CD14-positive monocyte (primary cell): ENCODE measurements at regions of chr20 and their contacts with region 1.

Region 1: GRCh38 chr20:33666293-33667244 is at the start of gene ACTL10:
- DNase-seq: peak; percentile 95 to 98 (median 98)
- H3K4me3 ChIP-seq: peak within 1 kb of the TSS; percentile 44 to 85 (median 51)
- H3K4me3 Mint-ChIP-seq: peak within 1 kb of the TSS; percentile 79 to 80
- H3K27ac ChIP-seq: peak within 1 kb of the TSS; percentile 78 to 82
- H3K27ac Mint-ChIP-seq: peak within 1 kb of the TSS; percentile 74 to 92 (median 88)
- H3K4me1 ChIP-seq: peaks cover 37 to 54% of the 10 kb centered on the region in 2 donors
- H3K4me1 Mint-ChIP-seq: peaks cover 38% of the 10 kb centered on the region
- H3K27me3 ChIP-seq: no peaks in the 10 kb centered on the region
- H3K27me3 Mint-ChIP-seq: peaks cover 2 to 3% (median 2%) of the 10 kb centered on the region in 3 donors
- CTCF ChIP-seq: peak; percentile 20
- polyA plus RNA-seq, gene ACTL10: 0.31 to 1.2 (median 1.1) TPM

Region 2: GRCh38 chr20:33450867-33451266 is 215.7 kb before region 1 on chr20:
- intact Hi-C with region 1: loop called (anchors 2 to 5 kb)
- DNase-seq: no peak
- H3K4me3 ChIP-seq: no peak overlapping the region
- H3K4me3 Mint-ChIP-seq: no peak overlapping the region
- H3K27ac ChIP-seq: no peak overlapping the region
- H3K27ac Mint-ChIP-seq: no peak overlapping the region
- H3K4me1 ChIP-seq: no peaks in the 10 kb centered on the region
- H3K4me1 Mint-ChIP-seq: peaks cover 2% of the 10 kb centered on the region
- H3K27me3 ChIP-seq: no peaks in the 10 kb centered on the region
- H3K27me3 Mint-ChIP-seq: peaks cover 3 to 7% (median 3%) of the 10 kb centered on the region in 3 donors
- CTCF ChIP-seq: no peak

Region 3: GRCh38 chr20:33459599-33459998 is 207.0 kb before region 1 on chr20:
- intact Hi-C with region 1: loop called (anchors 2 to 5 kb)
- DNase-seq: no peak
- H3K4me3 ChIP-seq: no peak overlapping the region
- H3K4me3 Mint-ChIP-seq: no peak overlapping the region
- H3K27ac ChIP-seq: no peak overlapping the region
- H3K27ac Mint-ChIP-seq: no peak overlapping the region
- H3K4me1 ChIP-seq: no peaks in the 10 kb centered on the region
- H3K4me1 Mint-ChIP-seq: peaks cover 2% of the 10 kb centered on the region
- H3K27me3 ChIP-seq: no peaks in the 10 kb centered on the region
- H3K27me3 Mint-ChIP-seq: peaks cover 1 to 4% (median 2%) of the 10 kb centered on the region in 3 donors
- CTCF ChIP-seq: no peak

Region 4: DNA sequence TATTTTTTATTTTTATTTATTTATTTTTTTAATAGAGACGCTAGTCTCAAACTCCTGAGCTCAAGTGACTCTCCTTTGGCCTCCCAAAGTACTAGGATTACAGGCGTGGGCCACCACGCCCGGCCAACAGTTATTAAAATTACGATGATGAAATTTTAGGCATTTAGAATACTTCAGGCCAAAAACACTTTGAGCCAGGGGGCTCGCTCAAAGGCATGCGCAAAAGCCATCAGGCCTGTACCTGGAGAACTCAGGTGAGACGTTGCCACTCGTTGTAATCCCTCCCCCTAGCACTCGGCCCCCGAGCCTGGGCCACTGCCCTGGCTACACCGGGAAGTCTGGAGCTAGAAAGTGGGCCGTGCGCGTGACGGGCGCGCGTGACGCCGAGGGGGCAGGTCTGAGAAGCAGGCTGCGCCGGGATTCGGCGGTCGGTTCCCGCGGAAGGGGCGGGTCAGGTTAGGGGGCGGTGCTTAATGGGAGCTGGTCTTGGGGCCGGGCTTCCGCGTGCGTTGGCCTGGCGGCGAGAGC is 177.0 kb before region 1 on chr20:
- intact Hi-C with region 1: loop called (anchors 10 kb)
- DNase-seq: peak; percentile 98
- H3K4me3 ChIP-seq: peak overlapping the region; percentile 58 to 72 (median 61)
- H3K4me3 Mint-ChIP-seq: peak overlapping the region; percentile 78 to 81
- H3K27ac ChIP-seq: peak overlapping the region; percentile 91 to 97
- H3K27ac Mint-ChIP-seq: peak overlapping the region; percentile 91 to 97 (median 94)
- H3K4me1 ChIP-seq: peaks cover 12 to 15% of the 10 kb centered on the region in 2 donors
- H3K4me1 Mint-ChIP-seq: peaks cover 18% of the 10 kb centered on the region
- H3K27me3 ChIP-seq: no peaks in the 10 kb centered on the region
- H3K27me3 Mint-ChIP-seq: peaks cover 0 to 2% (median 0%) of the 10 kb centered on the region in 3 donors
- CTCF ChIP-seq: no peak

Region 5: DNA sequence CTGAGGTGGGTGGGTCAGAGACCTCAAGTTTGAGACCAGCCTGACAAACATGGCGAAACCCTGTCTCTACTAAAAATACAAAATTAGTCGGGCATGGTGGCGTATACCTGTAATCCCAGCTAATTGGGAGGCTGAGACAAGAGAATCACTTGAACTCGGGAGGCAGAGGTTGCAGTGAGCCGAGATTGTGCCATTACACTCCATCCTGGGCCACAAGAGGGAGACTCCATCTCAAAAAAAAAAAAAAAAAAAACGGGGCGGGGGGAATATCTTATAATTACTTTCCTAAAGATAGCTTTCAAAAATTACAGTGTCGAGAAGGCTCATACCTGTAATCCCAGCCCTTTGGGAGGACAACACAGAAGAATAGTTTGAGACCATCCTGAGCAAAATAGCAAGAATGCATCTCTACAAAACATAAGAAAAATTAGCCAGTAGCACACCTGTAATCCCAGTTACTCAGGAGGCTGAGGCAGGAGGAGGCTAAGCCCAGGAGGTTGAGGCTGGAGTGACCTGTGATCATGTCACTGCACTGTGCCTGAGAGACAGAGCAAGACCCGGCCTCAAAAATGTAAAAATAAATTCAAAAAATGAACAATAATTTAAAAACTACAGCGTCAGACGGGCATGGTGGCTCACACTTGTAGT is 150.9 kb before region 1 on chr20:
- intact Hi-C with region 1: no loop called
- DNase-seq: no peak
- H3K4me3 ChIP-seq: no peak overlapping the region
- H3K4me3 Mint-ChIP-seq: no peak overlapping the region
- H3K27ac ChIP-seq: no peak overlapping the region
- H3K27ac Mint-ChIP-seq: no peak overlapping the region
- H3K4me1 ChIP-seq: no peaks in the 10 kb centered on the region
- H3K4me1 Mint-ChIP-seq: peaks cover 5% of the 10 kb centered on the region
- H3K27me3 ChIP-seq: no peaks in the 10 kb centered on the region
- H3K27me3 Mint-ChIP-seq: no peaks in the 10 kb centered on the region
- CTCF ChIP-seq: no peak

Region 6: DNA sequence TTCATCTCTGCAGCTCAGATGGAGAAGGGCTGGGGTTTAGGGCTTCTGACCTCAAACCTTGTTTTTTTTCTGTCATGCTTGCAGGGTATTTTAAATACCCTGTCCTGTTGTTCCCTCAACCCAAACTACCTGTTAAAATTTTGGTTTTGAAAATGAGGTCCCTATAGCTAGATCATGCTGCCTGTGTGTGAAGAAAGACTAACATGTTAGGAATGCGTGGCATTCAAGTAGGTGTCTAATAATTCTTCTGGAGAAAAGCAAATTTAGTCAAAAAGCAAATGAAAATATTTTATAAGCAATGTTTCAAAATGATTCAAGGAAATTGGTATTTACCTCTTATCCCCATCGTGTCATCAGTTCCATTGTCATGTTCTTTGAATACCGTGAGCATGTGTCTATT is 81.6 kb before region 1 on chr20:
- intact Hi-C with region 1: no loop called
- DNase-seq: no peak
- H3K4me3 ChIP-seq: no peak overlapping the region
- H3K4me3 Mint-ChIP-seq: no peak overlapping the region
- H3K27ac ChIP-seq: no peak overlapping the region
- H3K27ac Mint-ChIP-seq: no peak overlapping the region
- H3K4me1 ChIP-seq: no peaks in the 10 kb centered on the region
- H3K4me1 Mint-ChIP-seq: no peaks in the 10 kb centered on the region
- H3K27me3 ChIP-seq: no peaks in the 10 kb centered on the region
- H3K27me3 Mint-ChIP-seq: no peaks in the 10 kb centered on the region
- CTCF ChIP-seq: no peak

Region 7: DNA sequence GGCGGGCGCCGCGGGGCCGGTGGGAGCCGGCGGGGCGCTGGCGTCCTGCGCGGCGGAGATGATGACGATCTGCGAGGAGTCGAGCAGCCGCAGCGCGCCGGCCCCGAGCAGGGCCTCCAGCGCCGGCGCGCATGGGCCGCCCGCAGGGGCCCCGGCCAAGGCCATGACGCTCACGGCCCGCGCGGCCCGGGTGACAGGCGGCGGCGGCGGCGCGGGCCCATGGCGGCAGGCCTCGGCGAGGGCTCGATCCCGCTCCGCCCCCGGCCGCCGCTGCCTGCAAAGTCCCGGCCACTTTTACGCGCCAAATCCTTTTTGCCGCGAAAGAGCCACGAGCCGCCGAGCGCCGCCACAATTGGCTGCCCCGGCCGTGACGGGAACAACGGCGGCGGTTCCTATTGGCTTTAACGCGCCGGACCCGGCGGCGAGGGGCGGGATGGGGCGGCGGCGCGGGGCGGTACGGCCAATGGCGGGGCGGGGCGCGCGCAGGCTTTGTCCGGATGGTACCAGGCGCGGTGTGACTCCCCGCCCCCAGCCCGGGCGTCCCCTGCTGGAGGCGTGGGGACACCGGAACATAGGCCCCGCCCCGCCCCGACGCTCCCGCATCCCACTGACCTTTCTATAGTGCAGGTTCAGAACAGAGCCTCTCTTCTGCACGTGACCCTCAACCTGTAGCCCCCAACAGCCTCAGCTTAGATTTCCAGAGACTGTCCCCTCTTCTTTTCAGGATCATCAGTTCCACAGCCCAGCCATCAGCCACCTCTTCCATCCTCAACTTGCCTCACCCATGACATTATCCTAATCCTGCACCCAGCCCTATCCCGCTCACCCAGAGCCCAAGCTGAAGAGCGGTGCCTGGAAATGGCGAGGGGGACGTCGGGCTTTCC is 19.8 kb after region 1 on chr20 and contains the start of gene E2F1:
- intact Hi-C with region 1: loop called in 1 of 2 experiments (anchors 1 kb)
- DNase-seq: peak; percentile 86 to 93 (median 89)
- H3K4me3 ChIP-seq: peak within 1 kb of the TSS; percentile 10 to 72 (median 32)
- H3K4me3 Mint-ChIP-seq: peak within 1 kb of the TSS; percentile 79 to 94
- H3K27ac ChIP-seq: peak within 1 kb of the TSS in 1 of 2 donors; percentile 52
- H3K27ac Mint-ChIP-seq: peak within 1 kb of the TSS; percentile 73 to 92 (median 86)
- H3K4me1 ChIP-seq: peaks cover 30 to 50% of the 10 kb centered on the region in 2 donors
- H3K4me1 Mint-ChIP-seq: peaks cover 51% of the 10 kb centered on the region
- H3K27me3 ChIP-seq: no peaks in the 10 kb centered on the region
- H3K27me3 Mint-ChIP-seq: peaks cover 0 to 2% (median 0%) of the 10 kb centered on the region in 3 donors
- CTCF ChIP-seq: peak; percentile 26
- polyA plus RNA-seq, gene E2F1: 0.17 to 1.1 TPM in 2 of 3 donors, not detected in the other

Region 8: DNA sequence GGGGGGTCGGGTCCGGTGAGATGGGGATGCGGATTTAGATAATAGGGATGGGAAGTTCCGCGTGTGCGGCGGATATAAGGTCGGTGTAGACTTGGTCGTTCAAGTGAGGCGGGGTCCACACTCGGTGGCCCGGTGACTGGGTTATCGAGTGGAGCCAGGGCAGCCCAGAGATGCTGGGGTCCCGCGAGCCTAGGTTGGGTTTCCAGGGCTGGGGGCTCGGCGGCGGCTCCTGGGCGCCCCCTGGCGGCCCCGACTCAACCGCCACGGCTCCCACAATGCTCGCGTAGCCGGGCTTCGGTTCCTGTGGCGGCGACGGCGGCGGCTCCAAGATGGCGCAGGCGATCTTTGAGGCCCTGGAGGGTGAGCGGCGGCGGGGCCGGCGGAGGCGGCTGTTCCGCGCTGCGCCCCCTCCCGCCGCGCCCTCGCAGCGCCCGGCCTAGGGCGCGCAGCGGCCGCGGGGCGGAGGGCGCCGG is 65.2 kb after region 1 on chr20 and contains the start of gene ZNF341:
- intact Hi-C with region 1: loop called in 1 of 2 experiments (anchors 5 kb)
- DNase-seq: peak; percentile 85 to 89 (median 87)
- H3K4me3 ChIP-seq: peak within 1 kb of the TSS; percentile 50 to 86 (median 86)
- H3K4me3 Mint-ChIP-seq: peak within 1 kb of the TSS; percentile 85 to 96
- H3K27ac ChIP-seq: peak within 1 kb of the TSS; percentile 83 to 84
- H3K27ac Mint-ChIP-seq: peak within 1 kb of the TSS; percentile 88 to 97 (median 95)
- H3K4me1 ChIP-seq: peaks cover 35 to 42% of the 10 kb centered on the region in 2 donors
- H3K4me1 Mint-ChIP-seq: peaks cover 34% of the 10 kb centered on the region
- H3K27me3 ChIP-seq: no peaks in the 10 kb centered on the region
- H3K27me3 Mint-ChIP-seq: peaks cover 0 to 2% (median 2%) of the 10 kb centered on the region in 3 donors
- CTCF ChIP-seq: peak; percentile 92
- polyA plus RNA-seq, gene ZNF341: 1.1 to 10.3 (median 2.3) TPM

Region 9: GRCh38 chr20:34096699-34097420 is 430.3 kb after region 1 on chr20:
- intact Hi-C with region 1: no loop called
- DNase-seq: no peak
- H3K4me3 ChIP-seq: no peak overlapping the region
- H3K4me3 Mint-ChIP-seq: no peak overlapping the region
- H3K27ac ChIP-seq: no peak overlapping the region
- H3K27ac Mint-ChIP-seq: peak overlapping the region in 3 of 7 donors; percentile 20 to 79 (median 57)
- H3K4me1 ChIP-seq: no peaks in the 10 kb centered on the region
- H3K4me1 Mint-ChIP-seq: no peaks in the 10 kb centered on the region
- H3K27me3 ChIP-seq: no peaks in the 10 kb centered on the region
- H3K27me3 Mint-ChIP-seq: no peaks in the 10 kb centered on the region
- CTCF ChIP-seq: no peak